ENCODE measurements at regions of chr1 and their contacts with region 1.

Region 1: DNA sequence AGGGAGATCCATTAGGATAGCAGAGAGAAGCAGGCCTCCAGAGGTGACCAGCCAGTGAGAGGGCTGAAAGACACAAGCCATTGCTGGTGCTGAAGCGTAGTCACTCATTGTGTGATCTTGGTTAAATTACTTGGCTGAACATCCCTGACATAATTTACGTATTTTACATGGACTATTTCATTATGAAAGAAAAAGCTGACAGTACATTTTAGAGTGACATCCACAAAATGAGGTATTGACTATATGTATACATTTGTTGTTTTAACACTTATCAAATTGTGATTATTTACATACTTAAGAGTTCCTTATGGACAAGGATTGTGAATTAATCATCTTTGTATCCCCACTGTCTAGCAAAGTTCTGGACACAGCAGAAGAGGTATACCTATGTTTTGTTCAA is 14.9 kb downstream of the DESI2 start:
- DNase-seq: no peak
- ATAC-seq: no peak
- H3K4me3 Mint-ChIP-seq: no peak overlapping the region
- H3K27ac Mint-ChIP-seq: no peak overlapping the region
- H3K4me1 Mint-ChIP-seq: peaks cover 5% of the 10 kb centered on the region
- H3K27me3 Mint-ChIP-seq: no peaks in the 10 kb centered on the region

Region 2: GRCh38 chr1:243864913-243865312 is 802.9 kb before region 1 on chr1:
- CTCF ChIA-PET with region 1: no interaction called
- POLR2A ChIA-PET with region 1: no interaction called
- intact Hi-C with region 1: no loop called
- DNase-seq: no peak
- ATAC-seq: no peak
- H3K4me3 Mint-ChIP-seq: no peak overlapping the region
- H3K27ac Mint-ChIP-seq: no peak overlapping the region
- H3K4me1 Mint-ChIP-seq: no peaks in the 10 kb centered on the region
- H3K27me3 Mint-ChIP-seq: peaks cover 2% of the 10 kb centered on the region

Region 3: DNA sequence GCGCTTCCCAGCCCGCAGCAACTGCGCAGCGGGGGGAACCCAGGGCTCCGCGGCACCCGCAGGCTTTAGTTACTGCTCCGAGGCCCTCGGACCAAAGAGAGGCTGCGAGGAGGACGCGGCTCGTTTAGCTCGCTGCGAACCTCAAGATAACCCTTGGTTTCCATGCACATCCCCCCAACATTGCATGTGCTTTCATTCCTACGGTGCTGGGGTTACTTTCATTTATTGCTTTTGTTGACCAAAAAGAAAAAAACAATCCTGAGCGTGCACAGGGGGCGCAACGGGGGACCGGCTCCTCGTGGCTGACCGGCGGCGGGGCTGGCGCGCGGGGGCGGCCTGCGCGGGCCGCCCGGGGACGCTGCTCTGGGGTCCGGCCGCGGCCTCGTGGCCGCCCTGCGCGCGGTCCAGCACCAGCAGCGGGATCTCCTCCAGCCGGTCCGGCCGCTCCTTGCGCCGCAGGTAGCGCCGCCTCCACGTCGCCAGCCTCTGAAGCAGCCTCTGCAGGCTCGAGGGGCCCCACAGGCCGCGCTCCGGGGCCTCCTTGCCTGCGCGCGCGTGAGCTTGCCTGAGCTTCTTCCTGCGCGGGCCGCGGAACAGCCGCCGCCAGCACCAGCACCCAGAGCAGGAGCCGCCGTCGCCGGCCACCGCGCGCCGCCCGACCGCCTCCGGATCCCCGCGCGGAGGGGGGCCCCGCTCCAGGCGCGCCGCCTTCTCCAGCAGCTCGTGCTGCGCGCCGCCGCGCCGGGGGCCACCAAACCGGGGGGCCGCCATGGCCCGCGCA is 62.5 kb after region 1 on chr1:
- CTCF ChIA-PET with region 1: no interaction called
- POLR2A ChIA-PET with region 1: interaction called, 10 read pairs
- intact Hi-C with region 1: no loop called
- DNase-seq: peak; percentile 58
- ATAC-seq: peak; percentile 73
- H3K4me3 Mint-ChIP-seq: peak overlapping the region; percentile 74
- H3K27ac Mint-ChIP-seq: peak overlapping the region; percentile 67
- H3K4me1 Mint-ChIP-seq: peaks cover 10% of the 10 kb centered on the region
- H3K27me3 Mint-ChIP-seq: peaks cover 10% of the 10 kb centered on the region